ENCODE measurements at regions of chr1 and their contacts with region 1.

Region 1: DNA sequence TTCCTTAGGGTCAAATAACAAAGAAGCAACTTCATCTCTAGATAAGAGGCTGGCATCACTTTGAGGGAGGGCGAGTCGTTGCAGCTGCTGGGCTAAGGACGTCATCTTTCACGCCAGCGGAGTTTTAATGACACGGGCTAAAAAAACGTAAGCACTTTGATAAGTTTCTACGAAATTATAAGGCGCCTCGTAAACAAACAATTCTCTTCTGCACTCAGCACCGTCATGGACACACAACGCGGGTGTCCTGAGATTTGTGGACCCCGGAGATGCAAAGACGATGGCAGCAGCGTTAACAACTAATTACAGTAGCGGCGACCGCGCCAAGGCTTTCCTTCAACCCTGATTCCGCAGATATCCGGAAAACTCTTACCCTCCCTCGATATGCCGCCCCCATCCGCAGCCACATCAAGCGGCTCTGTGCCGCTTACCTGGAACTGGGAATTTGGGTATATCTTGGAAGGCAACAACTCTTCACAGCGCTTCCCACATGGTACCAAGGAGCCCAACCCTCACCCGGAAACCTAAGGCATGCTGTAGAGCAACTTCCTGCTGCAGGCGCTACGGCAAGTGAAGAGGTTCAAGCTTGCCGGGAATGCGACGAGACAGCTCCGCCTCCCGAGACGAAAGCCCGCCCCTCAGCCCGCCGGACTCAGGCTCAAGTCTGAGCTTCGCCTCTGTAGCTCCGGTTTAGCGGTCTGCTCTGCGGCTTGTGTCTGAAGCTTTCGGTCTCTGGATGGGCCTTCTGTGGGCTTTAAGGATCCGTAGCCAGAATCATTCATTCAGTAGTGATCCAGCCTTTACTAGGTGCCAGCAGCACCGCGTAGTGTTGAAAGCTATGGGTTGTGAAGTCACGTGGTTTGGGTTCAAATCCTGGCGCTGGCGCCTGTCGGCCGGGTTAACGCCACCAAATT is at the start of gene HEATR1:
- DNase-seq: peak; percentile 93 to 98 (median 94)
- ATAC-seq: peak; percentile 98
- H3K4me3 ChIP-seq: peak within 1 kb of the TSS; percentile 70
- H3K27ac ChIP-seq: peak within 1 kb of the TSS; percentile 79
- H3K4me1 ChIP-seq: peaks cover 4 to 10% of the 10 kb centered on the region in 2 experiments; a peak in 2 of 5 replicates
- H3K27me3 ChIP-seq: no peaks in the 10 kb centered on the region; a peak in 1 of 5 replicates
- CTCF ChIP-seq: 0 out of 6 replicates have a peak, but pooled peaks of 1 of the 3 experiments have one; percentile 16
- EP300 ChIP-seq: peak; percentile 61; the same call in 1 of the 2 replicates
- POLR2A ChIP-seq: peak; percentile 94
- RAD21 ChIP-seq: no peak
- polyA plus RNA-seq, gene HEATR1: 28.3 to 30.9 TPM

Region 2: DNA sequence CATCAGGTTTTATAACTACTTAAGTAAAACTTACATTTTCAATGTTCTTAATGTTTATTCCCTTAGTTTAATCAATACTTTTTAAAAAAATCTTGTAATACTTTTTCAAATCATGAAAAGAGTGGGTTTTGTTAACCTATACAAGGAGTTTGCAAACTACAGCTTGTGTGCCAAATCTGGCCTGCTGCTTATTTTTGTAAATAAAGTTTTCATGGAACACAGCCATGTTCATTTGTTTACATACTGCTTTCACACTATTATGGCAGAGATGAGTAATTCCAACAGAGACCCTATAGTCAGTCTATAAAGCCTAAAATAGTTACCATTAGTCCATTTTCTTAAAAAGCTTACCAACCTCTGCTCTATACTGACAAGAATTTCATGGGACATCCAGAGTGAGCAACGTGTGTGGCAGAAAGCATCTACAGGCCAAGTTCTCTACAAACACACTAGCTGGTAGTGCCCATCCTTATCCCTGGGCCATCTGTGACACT is 365.1 kb before region 1 on chr1:
- CTCF ChIA-PET with region 1: no interaction called
- POLR2A ChIA-PET with region 1: no interaction called
- in situ Hi-C with region 1: no loop called
- intact Hi-C with region 1: no loop called
- DNase-seq: no peak
- ATAC-seq: no peak
- H3K4me3 ChIP-seq: no peak overlapping the region
- H3K27ac ChIP-seq: no peak overlapping the region
- H3K4me1 ChIP-seq: peaks cover 0 to 6% of the 10 kb centered on the region in 2 experiments; a peak in 3 of 5 replicates
- H3K27me3 ChIP-seq: no peaks in the 10 kb centered on the region
- CTCF ChIP-seq: no peak
- EP300 ChIP-seq: no peak
- POLR2A ChIP-seq: no peak
- RAD21 ChIP-seq: no peak

Region 3: DNA sequence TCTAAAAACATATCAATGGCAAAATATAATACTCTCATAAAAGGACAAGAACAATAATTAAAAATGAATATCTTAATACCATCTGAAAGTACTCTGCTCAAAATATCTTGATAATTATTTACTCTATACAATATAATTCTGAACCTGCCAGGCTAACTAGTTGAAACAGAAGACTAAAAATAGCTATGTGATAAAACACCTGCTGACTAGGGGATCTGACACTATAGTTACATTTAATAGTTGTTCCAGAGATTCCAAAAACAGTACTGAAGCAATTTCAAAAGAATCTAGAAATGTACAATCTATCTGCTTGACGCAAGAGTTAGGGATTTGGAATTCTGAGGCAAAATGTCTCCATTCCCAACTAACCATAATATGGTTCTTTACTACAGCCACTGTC is 352.7 kb before region 1 on chr1:
- CTCF ChIA-PET with region 1: no interaction called
- POLR2A ChIA-PET with region 1: no interaction called
- in situ Hi-C with region 1: no loop called
- intact Hi-C with region 1: no loop called
- DNase-seq: no peak
- ATAC-seq: no peak
- H3K4me3 ChIP-seq: no peak overlapping the region
- H3K27ac ChIP-seq: no peak overlapping the region
- H3K4me1 ChIP-seq: peaks cover 0 to 12% of the 10 kb centered on the region in 2 experiments; a peak in 3 of 5 replicates
- H3K27me3 ChIP-seq: no peaks in the 10 kb centered on the region
- CTCF ChIP-seq: no peak
- EP300 ChIP-seq: no peak
- POLR2A ChIP-seq: no peak
- RAD21 ChIP-seq: no peak

Region 4: DNA sequence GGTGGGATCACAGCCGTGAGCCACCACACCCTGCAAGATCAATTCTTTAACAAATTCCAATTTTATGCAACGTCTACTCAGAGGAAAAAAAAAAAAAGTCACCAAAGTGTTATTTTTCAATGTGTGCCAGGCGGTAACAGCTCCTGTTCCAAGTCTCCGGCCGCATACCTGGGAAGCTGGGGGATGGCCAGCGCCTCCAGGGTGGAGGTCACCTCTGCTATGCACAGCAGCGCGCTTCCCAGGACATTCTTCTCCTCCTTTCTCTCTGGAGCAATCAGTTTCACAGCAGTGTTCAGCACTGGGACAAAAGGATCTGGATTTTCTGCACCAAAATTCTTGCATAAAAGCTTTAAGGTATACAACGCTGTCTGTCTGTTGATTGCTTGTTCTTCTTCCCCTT is 46.2 kb before region 1 on chr1:
- CTCF ChIA-PET with region 1: no interaction called
- POLR2A ChIA-PET with region 1: no interaction called
- in situ Hi-C with region 1: no loop called
- intact Hi-C with region 1: no loop called
- DNase-seq: no peak
- ATAC-seq: no peak
- H3K4me3 ChIP-seq: no peak overlapping the region
- H3K27ac ChIP-seq: no peak overlapping the region
- H3K4me1 ChIP-seq: no peaks in the 10 kb centered on the region
- H3K27me3 ChIP-seq: no peaks in the 10 kb centered on the region
- CTCF ChIP-seq: no peak
- EP300 ChIP-seq: no peak
- POLR2A ChIP-seq: no peak
- RAD21 ChIP-seq: no peak

Region 5: DNA sequence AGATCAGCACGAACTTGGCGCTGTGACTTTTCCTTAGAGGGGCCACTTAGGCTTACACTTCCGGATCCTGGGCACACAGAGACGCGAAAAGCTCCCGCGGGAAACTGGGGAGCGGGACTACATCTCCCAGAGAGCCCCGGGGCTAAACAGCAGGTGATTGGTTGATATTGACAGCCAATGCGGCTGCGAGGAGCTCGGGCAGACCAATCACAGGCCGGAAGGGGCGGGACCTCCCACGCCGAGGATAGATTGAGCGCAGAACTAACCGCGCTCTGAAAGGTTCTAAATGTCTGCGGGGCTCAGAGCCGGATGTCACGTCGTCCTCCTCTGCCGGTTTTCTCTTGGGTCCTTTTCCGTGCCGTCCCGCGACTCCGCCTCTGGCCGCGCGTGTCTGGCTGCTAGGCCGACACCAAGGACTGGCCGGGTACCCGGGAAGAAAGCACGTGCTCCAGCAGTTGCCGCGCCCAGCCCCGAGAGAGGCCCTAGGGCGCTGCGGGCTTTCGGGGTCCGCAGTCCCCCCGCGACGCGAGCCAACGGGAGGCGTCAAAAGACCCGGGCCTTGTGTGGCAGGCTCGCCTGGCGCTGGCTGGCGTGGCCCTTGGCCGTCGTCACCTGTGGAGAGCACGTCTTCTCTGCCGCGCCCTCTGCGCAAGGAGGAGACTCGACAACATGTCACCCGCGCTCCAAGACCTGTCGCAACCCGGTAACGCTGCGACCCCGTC is 190.9 kb after region 1 on chr1 and contains the start of gene MTR:
- CTCF ChIA-PET with region 1: no interaction called
- POLR2A ChIA-PET with region 1: interaction called, 4 read pairs
- in situ Hi-C with region 1: no loop called
- intact Hi-C with region 1: loop called (anchors 5 kb)
- DNase-seq: peak; percentile 99 to 100 (median 100)
- ATAC-seq: peak; percentile 99
- H3K4me3 ChIP-seq: peak within 1 kb of the TSS; percentile 58
- H3K27ac ChIP-seq: peak within 1 kb of the TSS; percentile 79
- H3K4me1 ChIP-seq: peaks cover 10 to 13% of the 10 kb centered on the region in 2 experiments; a peak in 4 of 5 replicates
- H3K27me3 ChIP-seq: peaks cover 0 to 2% of the 10 kb centered on the region in 2 experiments; a peak in 2 of 5 replicates
- CTCF ChIP-seq: peak in 2 of 3 experiments; percentile 0 to 4; a peak in 1 of 6 replicates
- EP300 ChIP-seq: peak; percentile 33; the same call in 1 of the 2 replicates
- POLR2A ChIP-seq: peak; percentile 98
- RAD21 ChIP-seq: peak in 1 of 2 experiments; percentile 3; a peak in 1 of 4 replicates
- polyA plus RNA-seq, gene MTR: 3.4 to 5.1 TPM

Region 6: GRCh38 chr1:236952246-236953003 is 348.2 kb after region 1 on chr1:
- CTCF ChIA-PET with region 1: interaction called, 3 read pairs
- POLR2A ChIA-PET with region 1: no interaction called
- in situ Hi-C with region 1: no loop called
- intact Hi-C with region 1: loop called (anchors 5 kb)
- DNase-seq: no peak
- ATAC-seq: no peak
- H3K4me3 ChIP-seq: no peak overlapping the region
- H3K27ac ChIP-seq: no peak overlapping the region
- H3K4me1 ChIP-seq: no peaks in the 10 kb centered on the region; a peak in 1 of 5 replicates
- H3K27me3 ChIP-seq: peaks cover 19 to 45% of the 10 kb centered on the region in 2 experiments
- CTCF ChIP-seq: no peak
- EP300 ChIP-seq: no peak
- POLR2A ChIP-seq: no peak
- RAD21 ChIP-seq: no peak

Region 7: DNA sequence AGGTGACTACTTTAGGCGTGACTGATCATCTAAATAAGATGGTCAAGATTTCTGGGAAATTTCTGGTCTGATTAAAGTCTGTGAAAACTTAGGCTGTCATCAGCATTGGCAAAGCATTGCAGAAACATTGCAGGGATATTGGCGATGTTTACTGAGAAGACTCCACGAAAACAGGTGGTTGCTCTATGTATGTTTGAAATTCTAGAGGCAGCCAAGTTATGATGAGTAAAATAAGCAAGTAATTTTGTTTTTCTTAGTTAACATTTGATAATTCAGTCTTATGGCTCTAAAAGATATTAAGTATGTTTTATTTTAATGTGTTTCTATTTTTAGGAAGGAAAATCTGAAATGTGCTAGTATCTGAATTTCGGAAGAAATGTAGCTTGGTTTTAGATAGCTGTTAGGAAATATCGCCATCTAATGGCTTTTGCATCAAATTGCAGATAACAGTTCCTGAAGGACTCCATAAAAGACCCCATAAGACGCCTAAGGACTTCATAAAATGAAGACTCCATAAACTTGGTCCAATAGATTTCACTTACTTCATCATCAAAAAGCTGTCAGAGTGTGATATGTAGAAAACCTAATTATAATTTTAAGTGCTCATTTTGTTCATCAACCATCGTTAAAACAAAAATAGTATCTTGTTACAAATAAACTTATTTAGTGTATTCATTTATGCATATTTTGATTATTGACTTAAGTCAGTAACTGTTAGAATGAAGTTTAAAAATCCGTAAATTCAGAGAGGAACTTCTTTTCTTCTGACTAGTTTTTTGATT is 782.3 kb after region 1 on chr1:
- CTCF ChIA-PET with region 1: interaction called, 7 read pairs
- POLR2A ChIA-PET with region 1: interaction called, 4 read pairs
- in situ Hi-C with region 1: no loop called
- intact Hi-C with region 1: loop called (anchors 1 kb)
- DNase-seq: peak; percentile 20 to 37 (median 30)
- ATAC-seq: peak; percentile 71
- H3K4me3 ChIP-seq: no peak overlapping the region
- H3K27ac ChIP-seq: no peak overlapping the region
- H3K4me1 ChIP-seq: no peaks in the 10 kb centered on the region
- H3K27me3 ChIP-seq: no peaks in the 10 kb centered on the region
- CTCF ChIP-seq: peak; percentile 42 to 76 (median 62); a peak in 5 of 6 replicates
- EP300 ChIP-seq: no peak
- POLR2A ChIP-seq: no peak
- RAD21 ChIP-seq: peak; percentile 86

Region 8: GRCh38 chr1:237799762-237800474 is 1195.7 kb after region 1 on chr1:
- CTCF ChIA-PET with region 1: no interaction called
- POLR2A ChIA-PET with region 1: no interaction called
- in situ Hi-C with region 1: no loop called
- intact Hi-C with region 1: loop called (anchors 10 kb)
- DNase-seq: peak; percentile 57 to 86 (median 80)
- ATAC-seq: peak; percentile 92
- H3K4me3 ChIP-seq: no peak overlapping the region
- H3K27ac ChIP-seq: no peak overlapping the region
- H3K4me1 ChIP-seq: no peaks in the 10 kb centered on the region
- H3K27me3 ChIP-seq: no peaks in the 10 kb centered on the region
- CTCF ChIP-seq: peak in 2 of 3 experiments; percentile 7 to 26; a peak in 2 of 6 replicates
- EP300 ChIP-seq: no peak
- POLR2A ChIP-seq: no peak
- RAD21 ChIP-seq: peak; percentile 18 to 48; a peak in 2 of 4 replicates